HEK293 (cell line): ENCODE measurements at regions of chr17 and their contacts with region 1.

Region 1: GRCh38 chr17:28416703-28417311 is 10.8 kb upstream of the SLC46A1 start:
- H3K4me3 ChIP-seq: no peak overlapping the region
- H3K27ac ChIP-seq: no peak overlapping the region
- H3K4me1 ChIP-seq: no peaks in the 10 kb centered on the region
- CTCF ChIP-seq: peak; percentile 77

Region 2: DNA sequence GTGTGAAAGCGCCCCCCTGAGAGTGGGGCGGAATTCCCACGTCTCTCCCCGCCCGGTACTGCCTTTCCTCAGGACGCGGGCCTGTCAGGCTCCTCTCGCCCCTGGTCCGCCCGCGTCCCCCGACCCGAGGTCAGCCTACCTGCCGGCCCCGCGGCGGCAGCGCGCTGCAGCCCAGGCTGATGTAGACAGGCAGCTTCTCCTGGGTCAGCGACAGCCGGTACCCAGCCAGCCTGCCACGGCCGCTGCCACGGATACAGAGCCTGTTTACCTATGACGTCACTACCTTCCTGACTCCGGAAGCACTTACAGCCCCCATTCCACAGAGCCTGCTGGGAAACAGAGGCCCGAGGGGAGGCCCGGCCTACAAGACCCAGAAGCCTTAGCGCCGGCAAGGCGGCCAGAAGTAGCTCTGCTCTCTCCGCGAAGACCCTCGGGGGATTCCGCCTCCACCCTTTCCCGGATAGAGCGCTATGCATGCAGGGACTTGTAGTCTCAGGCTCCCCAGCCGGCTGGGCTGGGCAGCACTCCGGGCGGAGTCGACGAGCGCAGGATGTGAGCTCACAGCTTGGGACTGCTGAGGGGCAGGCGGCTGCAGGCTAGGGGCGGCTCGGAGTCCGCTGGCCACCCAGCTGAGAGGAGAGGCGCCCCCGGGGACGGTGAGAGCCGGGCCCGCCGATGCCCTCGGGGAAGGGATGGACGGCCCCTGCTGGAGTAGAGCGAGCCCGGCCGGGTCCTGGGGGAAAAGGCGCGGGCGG is 81.4 kb before region 1 on chr17 and contains the starts of genes IFT20 and TNFAIP1:
- CTCF ChIA-PET with region 1: interaction called, 10 read pairs
- POLR2A ChIA-PET with region 1: interaction called, 8 read pairs
- H3K4me3 ChIP-seq: peak within 1 kb of the TSS; percentile 87
- H3K27ac ChIP-seq: peak within 1 kb of the TSS; percentile 62
- H3K4me1 ChIP-seq: peaks cover 14% of the 10 kb centered on the region
- CTCF ChIP-seq: peak; percentile 84

Region 3: GRCh38 chr17:28371245-28372202 is 45.3 kb before region 1 on chr17 and contains the start of gene SARM1:
- CTCF ChIA-PET with region 1: interaction called, 11 read pairs
- POLR2A ChIA-PET with region 1: interaction called, 3 read pairs
- H3K4me3 ChIP-seq: peak within 1 kb of the TSS; percentile 50
- H3K27ac ChIP-seq: peak within 1 kb of the TSS; percentile 87
- H3K4me1 ChIP-seq: peaks cover 13% of the 10 kb centered on the region
- CTCF ChIP-seq: 0 out of 2 replicates have a peak, but pooled peaks have one; percentile 23

Region 4: GRCh38 chr17:28398280-28398981 is 18.4 kb before region 1 on chr17:
- CTCF ChIA-PET with region 1: interaction called, 34 read pairs
- POLR2A ChIA-PET with region 1: no interaction called
- H3K4me3 ChIP-seq: no peak overlapping the region
- H3K27ac ChIP-seq: no peak overlapping the region
- H3K4me1 ChIP-seq: no peaks in the 10 kb centered on the region
- CTCF ChIP-seq: no peak

Region 5: GRCh38 chr17:28433721-28434120 is 16.9 kb after region 1 on chr17:
- CTCF ChIA-PET with region 1: interaction called, 42 read pairs
- POLR2A ChIA-PET with region 1: no interaction called
- H3K4me3 ChIP-seq: no peak overlapping the region
- H3K27ac ChIP-seq: no peak overlapping the region
- H3K4me1 ChIP-seq: no peaks in the 10 kb centered on the region; the same call in 1 of the 2 replicates
- CTCF ChIP-seq: no peak

Region 6: GRCh38 chr17:28467456-28468025 is 50.7 kb after region 1 on chr17:
- CTCF ChIA-PET with region 1: interaction called, 17 read pairs
- POLR2A ChIA-PET with region 1: no interaction called
- H3K4me3 ChIP-seq: no peak overlapping the region
- H3K27ac ChIP-seq: no peak overlapping the region
- H3K4me1 ChIP-seq: peaks cover 3% of the 10 kb centered on the region; the same call in 1 of the 2 replicates
- CTCF ChIP-seq: no peak

Region 7: GRCh38 chr17:28500712-28501379 is 84.0 kb after region 1 on chr17:
- CTCF ChIA-PET with region 1: no interaction called
- POLR2A ChIA-PET with region 1: no interaction called
- H3K4me3 ChIP-seq: no peak overlapping the region
- H3K27ac ChIP-seq: no peak overlapping the region
- H3K4me1 ChIP-seq: no peaks in the 10 kb centered on the region
- CTCF ChIP-seq: no peak